ENCODE measurements at regions of chrX and their contacts with region 1.

Region 1: DNA sequence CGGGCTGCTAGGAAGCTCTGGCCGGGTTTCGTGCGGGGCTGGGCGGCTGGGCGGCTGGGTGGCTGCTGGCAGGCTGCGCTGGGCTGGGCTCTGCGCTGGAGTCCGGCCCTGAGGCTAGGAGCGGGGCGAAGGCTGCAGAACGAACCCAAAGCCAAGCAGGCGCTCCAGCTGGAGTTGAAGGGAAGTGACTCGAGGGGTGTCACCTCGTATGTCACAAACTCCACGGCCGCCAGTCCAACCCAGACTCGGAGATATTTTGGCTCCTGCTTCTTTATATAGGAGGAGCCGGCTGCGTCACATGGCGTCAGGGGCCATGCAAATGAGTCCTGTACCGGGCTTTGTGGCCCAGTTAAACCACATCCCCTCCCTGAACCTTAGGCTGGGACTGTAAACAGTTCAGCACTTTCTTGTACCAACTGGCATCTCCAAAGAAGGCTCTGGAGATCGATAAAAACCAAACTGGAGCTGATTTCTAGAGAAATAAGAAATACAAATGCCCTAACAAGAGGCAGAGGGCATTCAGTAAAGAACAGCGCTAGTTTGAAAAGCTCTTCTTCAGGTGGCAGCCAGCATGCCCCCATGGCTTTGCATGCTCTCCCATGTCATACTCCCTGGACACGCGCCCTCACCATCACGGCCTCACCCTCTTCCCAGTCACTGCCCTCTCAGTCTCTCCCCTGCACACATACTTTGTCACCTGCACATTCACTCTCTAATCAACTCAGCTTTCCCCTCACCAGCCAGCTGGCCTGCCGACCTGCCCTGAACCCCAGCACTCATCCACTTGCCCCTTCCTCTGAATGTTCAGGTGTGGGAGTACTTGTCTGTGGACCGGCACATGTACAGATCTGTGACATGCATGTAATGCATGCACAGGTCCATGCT is 58.5 kb downstream of the TSC22D3 start:
- DNase-seq: peak; percentile 77 to 96 (median 91)
- ATAC-seq: peak; percentile 68
- H3K4me3 ChIP-seq: peak overlapping the region; percentile 97
- H3K4me3 Mint-ChIP-seq: peak overlapping the region; percentile 87 to 96 (median 92)
- H3K27ac ChIP-seq: peak overlapping the region; percentile 100
- H3K27ac Mint-ChIP-seq: peak overlapping the region; percentile 94 to 100 (median 98)
- H3K4me1 ChIP-seq: peaks cover 33 to 41% of the 10 kb centered on the region in 2 donors
- H3K4me1 Mint-ChIP-seq: peaks cover 12 to 71% (median 54%) of the 10 kb centered on the region in 7 donors
- H3K27me3 ChIP-seq: no peaks in the 10 kb centered on the region
- H3K27me3 Mint-ChIP-seq: no peaks in the 10 kb centered on the region

Region 2: GRCh38 chrX:107537815-107538214 is 179.2 kb before region 1 on chrX:
- CTCF ChIA-PET with region 1: no interaction called
- POLR2A ChIA-PET with region 1: no interaction called
- intact Hi-C with region 1: loop called in 1 of 2 experiments (anchors 5 kb)
- DNase-seq: peak in 7 of 9 donors; percentile 17 to 43 (median 29)
- ATAC-seq: peak; percentile 57
- H3K4me3 ChIP-seq: no peak overlapping the region
- H3K4me3 Mint-ChIP-seq: no peak overlapping the region
- H3K27ac ChIP-seq: no peak overlapping the region
- H3K27ac Mint-ChIP-seq: no peak overlapping the region
- H3K4me1 ChIP-seq: no peaks in the 10 kb centered on the region
- H3K4me1 Mint-ChIP-seq: peaks cover 0 to 4% (median 0%) of the 10 kb centered on the region in 7 donors
- H3K27me3 ChIP-seq: no peaks in the 10 kb centered on the region
- H3K27me3 Mint-ChIP-seq: peaks cover 0 to 12% (median 6%) of the 10 kb centered on the region in 5 donors

Region 3: DNA sequence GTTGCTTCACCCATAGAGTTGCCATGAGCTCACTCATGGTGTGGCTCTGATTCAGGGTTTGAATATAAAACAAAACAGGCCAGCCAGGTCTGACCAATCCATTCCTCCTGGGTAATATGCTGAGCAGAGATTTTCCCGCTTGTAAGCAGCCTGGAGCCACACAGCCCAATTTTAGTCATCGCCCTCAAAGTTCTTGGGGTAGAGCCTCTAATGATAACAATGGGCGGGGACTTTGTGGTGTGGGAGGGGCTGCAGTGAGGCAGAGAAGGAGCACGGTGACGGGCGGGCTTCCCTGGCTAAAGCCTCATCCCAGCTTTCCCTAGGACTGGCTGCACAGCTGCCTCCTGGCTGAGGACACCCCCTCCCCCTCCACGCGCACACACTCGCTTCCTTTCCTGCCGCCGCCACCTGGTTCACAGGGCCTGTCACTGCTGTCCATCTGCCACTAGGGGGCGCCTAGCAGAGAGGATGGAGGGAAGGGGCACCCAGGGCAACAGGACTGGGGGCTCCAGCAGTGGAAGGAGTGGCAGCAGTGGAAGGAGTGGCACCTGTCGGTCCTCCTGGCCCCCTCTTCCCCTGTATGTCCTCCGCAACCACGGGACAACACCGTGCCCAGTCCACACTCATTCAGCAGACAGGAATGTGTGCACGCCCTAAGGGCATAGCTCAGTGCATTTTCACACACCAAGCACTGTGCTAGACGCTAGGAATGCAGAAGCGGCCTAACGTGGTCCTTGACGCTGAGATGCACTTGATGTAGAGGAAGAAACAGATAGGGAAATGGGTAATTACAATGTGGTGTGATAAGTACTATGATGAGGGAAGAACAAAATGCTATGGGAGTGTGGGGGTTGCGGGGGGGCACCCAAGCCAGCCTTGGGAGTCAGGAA is 61.9 kb before region 1 on chrX:
- CTCF ChIA-PET with region 1: interaction called, 26 read pairs
- POLR2A ChIA-PET with region 1: interaction called, 1,138 read pairs
- intact Hi-C with region 1: loop called (anchors 1 kb)
- DNase-seq: peak; percentile 49 to 76 (median 60)
- ATAC-seq: peak; percentile 94
- H3K4me3 ChIP-seq: no peak overlapping the region
- H3K4me3 Mint-ChIP-seq: no peak overlapping the region
- H3K27ac ChIP-seq: no peak overlapping the region
- H3K27ac Mint-ChIP-seq: peak overlapping the region in 7 of 9 donors; percentile 1 to 89 (median 72)
- H3K4me1 ChIP-seq: peaks cover 0 to 6% of the 10 kb centered on the region in 2 donors
- H3K4me1 Mint-ChIP-seq: peaks cover 6 to 30% (median 18%) of the 10 kb centered on the region in 7 donors
- H3K27me3 ChIP-seq: no peaks in the 10 kb centered on the region
- H3K27me3 Mint-ChIP-seq: no peaks in the 10 kb centered on the region

Region 4: GRCh38 chrX:107701493-107702121 is 15.5 kb before region 1 on chrX:
- CTCF ChIA-PET with region 1: no interaction called
- POLR2A ChIA-PET with region 1: interaction called, 14 read pairs
- intact Hi-C with region 1: no loop called
- DNase-seq: no peak
- ATAC-seq: peak; percentile 74
- H3K4me3 ChIP-seq: no peak overlapping the region
- H3K4me3 Mint-ChIP-seq: no peak overlapping the region
- H3K27ac ChIP-seq: no peak overlapping the region
- H3K27ac Mint-ChIP-seq: peak overlapping the region in 1 of 9 donors; percentile 51
- H3K4me1 ChIP-seq: no peaks in the 10 kb centered on the region
- H3K4me1 Mint-ChIP-seq: peaks cover 17 to 33% (median 25%) of the 10 kb centered on the region in 7 donors
- H3K27me3 ChIP-seq: no peaks in the 10 kb centered on the region
- H3K27me3 Mint-ChIP-seq: peaks cover 0 to 4% (median 0%) of the 10 kb centered on the region in 5 donors

Region 5: DNA sequence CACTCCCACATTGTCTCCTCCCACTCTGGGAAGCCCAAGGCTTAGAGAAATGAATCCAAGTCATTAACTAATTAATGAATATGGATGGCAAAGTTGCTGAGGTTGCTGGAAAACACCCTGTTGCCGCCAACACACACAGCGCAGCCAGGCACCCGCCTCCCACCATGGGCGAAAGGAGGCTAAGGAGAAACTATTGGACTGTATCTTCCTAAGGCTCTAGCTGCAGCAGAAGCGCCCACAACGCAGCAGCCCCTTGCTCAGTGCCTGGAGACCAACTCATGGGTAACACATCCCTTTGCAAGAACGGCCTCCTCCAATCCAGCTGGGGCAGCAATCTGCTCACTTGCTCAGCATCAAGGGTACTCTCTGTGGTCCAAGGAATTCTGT is 24.3 kb after region 1 on chrX:
- CTCF ChIA-PET with region 1: interaction called, 21 read pairs
- POLR2A ChIA-PET with region 1: interaction called, 142 read pairs
- intact Hi-C with region 1: loop called (anchors 1 kb)
- DNase-seq: peak in 1 of 9 donors; percentile 10
- ATAC-seq: no peak
- H3K4me3 ChIP-seq: peak overlapping the region; percentile 45
- H3K4me3 Mint-ChIP-seq: peak overlapping the region; percentile 80 to 96 (median 85)
- H3K27ac ChIP-seq: peak overlapping the region; percentile 72
- H3K27ac Mint-ChIP-seq: peak overlapping the region; percentile 94 to 100 (median 99)
- H3K4me1 ChIP-seq: peaks cover 26 to 45% of the 10 kb centered on the region in 2 donors
- H3K4me1 Mint-ChIP-seq: peaks cover 15 to 70% (median 45%) of the 10 kb centered on the region in 7 donors
- H3K27me3 ChIP-seq: no peaks in the 10 kb centered on the region
- H3K27me3 Mint-ChIP-seq: peaks cover 0 to 7% (median 0%) of the 10 kb centered on the region in 5 donors

Region 6: DNA sequence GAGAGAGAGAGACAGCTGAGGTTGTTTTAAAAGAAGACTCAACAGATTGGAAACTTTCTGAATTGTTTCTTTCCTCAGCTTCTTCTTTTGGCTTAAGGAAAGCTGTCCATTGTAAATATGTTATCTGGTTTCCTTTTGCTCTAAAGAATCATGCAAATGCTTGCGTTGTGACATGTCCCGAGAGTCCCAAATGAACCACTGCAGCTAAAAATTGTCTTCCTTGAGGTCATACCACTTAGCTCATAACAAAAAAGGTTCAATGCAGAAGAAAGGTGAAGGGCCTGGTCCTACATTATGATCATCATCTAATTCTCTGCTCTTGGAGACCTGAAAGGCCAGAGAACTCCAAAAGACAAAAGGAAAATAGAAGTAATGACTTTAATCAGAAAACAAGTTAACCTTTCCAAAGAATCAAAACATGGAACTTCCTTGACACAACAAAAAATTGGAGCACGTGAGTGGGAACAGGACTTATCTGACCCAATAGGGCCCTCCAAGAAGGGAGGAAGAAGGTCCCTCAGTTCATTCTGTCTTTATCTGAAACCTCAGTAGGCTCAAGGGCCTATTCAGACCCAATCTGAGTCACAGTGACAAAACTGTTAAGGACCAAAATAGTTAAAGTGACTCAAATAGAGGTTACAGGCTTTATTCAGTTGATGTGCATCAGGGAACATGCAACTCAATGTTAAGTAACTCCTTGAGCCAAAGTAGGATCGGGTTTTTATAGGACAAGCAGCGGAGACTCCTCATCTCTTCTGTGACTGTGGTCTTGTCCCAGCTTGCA is 313.1 kb after region 1 on chrX:
- CTCF ChIA-PET with region 1: no interaction called
- POLR2A ChIA-PET with region 1: no interaction called
- intact Hi-C with region 1: no loop called
- DNase-seq: no peak
- ATAC-seq: no peak
- H3K4me3 ChIP-seq: no peak overlapping the region
- H3K4me3 Mint-ChIP-seq: peak overlapping the region in 2 of 10 donors; percentile 9 to 42
- H3K27ac ChIP-seq: no peak overlapping the region
- H3K27ac Mint-ChIP-seq: peak overlapping the region in 3 of 9 donors; percentile 63 to 76 (median 68)
- H3K4me1 ChIP-seq: peaks cover 0 to 11% of the 10 kb centered on the region in 2 donors
- H3K4me1 Mint-ChIP-seq: peaks cover 6 to 85% (median 55%) of the 10 kb centered on the region in 7 donors
- H3K27me3 ChIP-seq: no peaks in the 10 kb centered on the region
- H3K27me3 Mint-ChIP-seq: peaks cover 0 to 1% (median 0%) of the 10 kb centered on the region in 5 donors